Dorsolateral prefrontal cortex (tissue), 120 donors: ENCODE measurements at regions of chr12 and their contacts with region 1.

Region 1: DNA sequence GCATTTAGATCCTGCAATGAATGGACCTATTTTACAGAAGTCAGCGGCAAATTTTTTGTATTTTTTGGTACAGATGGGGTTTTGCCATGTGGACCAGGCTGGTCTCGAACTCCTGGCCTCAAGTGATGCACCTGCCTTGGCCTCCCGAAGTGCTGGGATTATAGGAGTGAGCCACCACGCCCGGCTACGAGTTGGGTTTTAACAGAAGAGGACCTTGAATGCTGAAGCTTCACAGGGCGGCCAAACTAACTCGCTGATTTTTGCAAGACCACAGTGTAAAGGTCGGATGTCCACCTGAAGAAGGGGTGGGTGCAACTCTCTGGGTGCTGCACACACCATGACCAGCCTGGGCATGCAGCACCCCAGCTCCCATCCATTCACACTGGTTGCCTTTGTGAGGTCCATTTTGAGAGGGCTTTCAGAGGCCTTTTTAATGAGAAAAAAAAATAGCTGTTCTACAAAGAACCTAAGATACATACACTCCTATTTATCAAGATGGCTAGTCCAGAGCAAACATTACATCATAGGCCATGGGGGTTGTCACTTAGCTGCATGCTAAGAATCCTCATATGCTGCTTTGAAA is 21.6 kb upstream of the CDK2AP1 start:
- DNase-seq: no peak
- H3K4me3 ChIP-seq: no peak overlapping the region
- H3K27ac ChIP-seq: peak overlapping the region in 2 of 59 donors; percentile 14 to 28
- H3K27me3 ChIP-seq: no peaks in the 10 kb centered on the region
- CTCF ChIP-seq: no peak

Region 2: DNA sequence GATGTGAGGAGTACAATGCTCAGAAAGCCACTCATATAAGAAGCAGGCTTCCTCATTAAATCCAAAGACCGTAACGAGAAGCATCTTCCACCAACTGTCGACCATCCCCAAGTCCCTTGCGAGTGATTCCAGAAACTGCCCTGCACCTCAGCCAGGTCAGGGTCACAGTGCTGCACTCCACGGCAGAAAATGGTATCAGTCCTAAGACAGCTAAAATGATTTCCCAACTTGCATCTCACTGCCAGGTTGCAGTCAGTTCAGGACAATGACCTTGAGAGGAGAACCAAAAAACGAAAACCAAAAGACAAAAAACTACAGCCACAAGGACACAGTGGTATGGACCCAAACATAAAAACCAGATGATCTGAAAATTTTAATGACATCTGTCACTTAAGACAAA is 50.8 kb after region 1 on chr12:
- intact Hi-C with region 1: loop called in 1 of 2 experiments (anchors 5 kb)
- DNase-seq: no peak
- H3K4me3 ChIP-seq: no peak overlapping the region
- H3K27ac ChIP-seq: no peak overlapping the region
- H3K27me3 ChIP-seq: no peaks in the 10 kb centered on the region
- CTCF ChIP-seq: no peak